Naive thymus-derived CD8-positive, alpha-beta T cell (primary cell): ENCODE measurements at regions of chr4 and their contacts with region 1.

Region 1: DNA sequence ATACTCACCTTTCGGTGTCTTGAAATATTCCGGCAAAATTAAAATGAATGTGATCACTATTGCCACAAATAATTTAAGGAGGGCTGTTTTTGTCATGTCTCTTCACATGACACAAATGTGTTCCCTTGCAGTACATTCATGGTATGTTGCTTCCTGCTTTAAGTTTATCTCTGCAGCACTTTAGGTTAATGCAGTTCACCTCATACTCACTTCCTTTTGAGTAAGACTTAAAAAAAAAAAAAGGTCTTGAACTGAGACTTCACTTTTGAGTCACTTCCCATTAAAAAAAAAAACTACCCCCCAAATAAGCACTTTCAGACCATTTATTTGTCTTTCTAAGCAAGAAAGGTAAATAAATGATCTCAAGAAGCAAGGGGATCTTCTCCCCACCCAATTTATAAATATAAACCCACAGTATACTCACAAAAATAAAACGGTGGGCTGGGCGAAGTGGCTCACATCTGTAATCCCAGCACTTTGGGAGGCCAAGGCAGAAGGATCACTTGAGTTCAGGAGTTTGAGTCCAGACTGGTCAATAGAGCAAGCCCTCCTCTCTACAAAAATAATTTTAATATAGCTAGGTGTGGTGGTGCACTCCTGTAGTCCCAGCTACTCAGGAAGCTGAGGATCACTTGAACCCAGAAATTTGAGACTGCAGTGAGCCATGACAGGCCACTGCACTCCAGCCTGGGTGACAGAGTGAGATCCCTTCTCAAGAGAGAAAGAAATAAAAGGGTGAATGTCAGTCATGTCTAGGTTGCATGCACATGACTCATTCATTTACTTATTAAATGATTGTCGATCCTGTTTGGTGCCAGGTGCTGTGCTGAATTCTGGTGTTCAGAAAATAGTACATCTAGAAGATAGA is at the start of gene TMEM156:
- DNase-seq: peak in 5 of 10 donors; percentile 15 to 74 (median 53)
- ATAC-seq: peak; percentile 89 to 93
- H3K4me3 Mint-ChIP-seq: peak within 1 kb of the TSS; percentile 59 to 88 (median 80)
- H3K27ac Mint-ChIP-seq: peak within 1 kb of the TSS; percentile 82 to 92 (median 86)
- H3K4me1 Mint-ChIP-seq: peaks cover 10 to 47% (median 35%) of the 10 kb centered on the region in 4 donors
- H3K27me3 Mint-ChIP-seq: no peaks in the 10 kb centered on the region
- polyA plus RNA-seq, gene TMEM156: 18.2 to 26.9 (median 21.5) TPM

Region 2: DNA sequence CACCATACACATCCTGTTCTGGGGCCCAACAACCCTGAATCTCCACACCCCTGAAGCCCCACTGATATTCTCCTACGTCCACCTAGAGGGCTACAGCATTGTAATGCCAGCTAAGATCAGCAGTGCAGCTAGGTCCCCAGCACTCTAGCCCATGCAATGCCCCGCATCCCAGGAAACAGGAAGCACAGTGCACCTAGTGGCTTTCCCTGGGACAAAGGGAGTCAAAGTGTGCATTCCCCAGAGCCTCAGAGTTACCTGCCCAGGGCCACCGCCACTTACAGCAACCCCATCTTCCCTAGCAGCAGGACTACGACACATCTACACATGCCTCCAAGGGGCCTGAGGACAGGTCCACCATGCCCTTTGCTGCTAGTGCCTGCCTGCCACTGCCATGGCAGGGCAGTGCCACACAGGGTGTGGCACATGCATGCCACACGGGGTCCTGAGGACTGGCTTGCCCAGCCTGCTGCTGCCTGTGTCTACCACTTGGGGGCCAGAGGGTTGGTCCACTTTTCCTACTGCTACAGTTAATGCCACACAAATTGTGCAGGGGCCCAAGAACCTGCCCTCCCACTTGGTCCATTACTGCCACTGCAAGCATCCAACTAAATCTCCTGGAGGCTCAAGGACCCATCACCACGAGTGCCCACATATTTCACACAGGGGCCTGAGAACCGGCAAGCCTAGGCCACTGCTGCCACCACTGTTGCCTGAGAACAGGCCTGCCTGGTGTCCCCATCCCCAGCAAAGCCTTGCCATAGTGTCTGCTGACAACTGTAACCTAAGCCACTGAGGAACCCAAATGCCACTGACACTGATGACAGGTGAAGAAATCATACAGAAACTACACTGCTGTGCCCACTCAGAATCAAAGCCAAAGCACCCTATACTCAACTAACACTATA is 199.6 kb before region 1 on chr4:
- POLR2A ChIA-PET with region 1: no interaction called
- DNase-seq: no peak
- ATAC-seq: no peak
- H3K4me3 Mint-ChIP-seq: no peak overlapping the region
- H3K27ac Mint-ChIP-seq: peak overlapping the region in 1 of 10 donors; percentile 63
- H3K4me1 Mint-ChIP-seq: peaks cover 8 to 31% (median 12%) of the 10 kb centered on the region in 4 donors
- H3K27me3 Mint-ChIP-seq: no peaks in the 10 kb centered on the region

Region 3: DNA sequence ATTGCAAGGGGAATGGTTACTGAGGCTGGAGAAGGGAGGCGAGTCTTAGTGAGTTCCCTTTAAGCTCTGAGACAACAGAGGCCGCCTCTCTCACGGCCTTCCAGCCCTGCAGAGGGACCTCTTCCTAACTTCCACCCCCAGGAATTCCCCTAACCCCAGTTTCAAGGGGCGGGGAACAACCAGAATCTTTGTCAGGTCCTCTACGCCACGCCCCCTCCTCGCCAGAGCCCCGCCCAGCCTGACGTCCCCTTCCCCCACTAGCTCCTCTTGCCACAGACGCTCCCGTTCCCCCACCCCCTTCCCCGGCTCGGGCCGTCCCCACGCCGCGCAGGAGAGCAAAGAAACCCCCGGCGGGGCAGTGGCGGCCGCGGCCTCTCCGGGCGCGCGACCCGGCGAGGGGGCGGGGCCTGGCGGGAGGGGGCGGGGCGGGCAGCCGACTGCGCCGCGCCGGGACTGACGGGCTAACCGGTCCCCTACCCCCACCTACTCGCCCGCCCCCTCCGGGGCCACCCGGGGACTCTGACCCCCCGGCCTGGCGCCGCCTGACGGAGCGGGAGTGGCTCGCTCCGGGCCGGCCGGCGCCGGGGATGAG is 12.0 kb after region 1 on chr4:
- POLR2A ChIA-PET with region 1: interaction called, 67 read pairs
- DNase-seq: peak; percentile 88 to 96 (median 92)
- ATAC-seq: peak; percentile 79 to 83
- H3K4me3 Mint-ChIP-seq: peak overlapping the region; percentile 86 to 98 (median 91)
- H3K27ac Mint-ChIP-seq: peak overlapping the region; percentile 87 to 99 (median 94)
- H3K4me1 Mint-ChIP-seq: peaks cover 18 to 57% (median 49%) of the 10 kb centered on the region in 4 donors
- H3K27me3 Mint-ChIP-seq: no peaks in the 10 kb centered on the region